Motor neuron (in vitro differentiated cells): ENCODE measurements at regions of chr15 and their contacts with region 1.

Region 1: GRCh38 chr15:89750560-89751542 is at the start of gene MESP1:
- ATAC-seq: peak; percentile 94 to 97 (median 96)
- H3K4me3 ChIP-seq: peak within 1 kb of the TSS; percentile 48 to 69 (median 48)
- H3K27ac ChIP-seq: no peak within 1 kb of the TSS
- H3K4me1 ChIP-seq: peaks cover 0 to 2% of the 10 kb centered on the region in 2 donors
- total RNA-seq, gene MESP1: 0.08 to 2.7 (median 1.3) TPM

Region 2: DNA sequence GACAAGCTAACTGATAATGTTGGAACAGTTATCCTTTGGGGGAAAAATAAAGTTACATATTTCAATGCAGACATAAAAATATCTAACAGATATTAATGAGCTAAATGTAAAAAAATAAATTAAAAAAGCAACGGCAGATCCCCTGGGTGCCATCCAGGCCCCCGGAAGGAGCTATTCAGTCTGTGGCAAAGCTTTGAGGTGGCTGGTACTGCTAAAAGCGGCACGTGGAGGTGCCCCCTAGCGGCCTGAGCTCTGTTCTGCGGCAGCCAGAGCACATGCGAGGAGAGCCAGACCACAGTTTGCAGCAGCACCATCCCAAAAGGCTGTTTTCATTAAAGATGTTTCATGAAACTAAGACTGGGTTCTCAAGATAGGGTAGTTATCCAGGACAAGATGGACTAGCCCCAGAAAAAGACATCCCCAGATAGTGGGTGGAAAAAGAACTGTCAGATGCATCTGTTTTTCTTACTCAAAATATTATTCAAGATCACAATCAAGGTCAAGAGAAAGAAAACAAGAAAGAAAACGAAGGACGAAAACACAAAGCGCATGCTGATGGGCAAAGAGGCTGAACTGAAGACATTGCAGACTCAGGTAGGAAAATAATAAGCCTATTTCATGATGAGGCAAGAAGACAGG is 124.2 kb after region 1 on chr15:
- in situ Hi-C with region 1: loop called in 5 of 9 experiments (anchors 10 to 25 kb)
- ATAC-seq: peak; percentile 79 to 99 (median 91)
- H3K4me3 ChIP-seq: no peak overlapping the region
- H3K27ac ChIP-seq: no peak overlapping the region
- H3K4me1 ChIP-seq: no peaks in the 10 kb centered on the region

Region 3: DNA sequence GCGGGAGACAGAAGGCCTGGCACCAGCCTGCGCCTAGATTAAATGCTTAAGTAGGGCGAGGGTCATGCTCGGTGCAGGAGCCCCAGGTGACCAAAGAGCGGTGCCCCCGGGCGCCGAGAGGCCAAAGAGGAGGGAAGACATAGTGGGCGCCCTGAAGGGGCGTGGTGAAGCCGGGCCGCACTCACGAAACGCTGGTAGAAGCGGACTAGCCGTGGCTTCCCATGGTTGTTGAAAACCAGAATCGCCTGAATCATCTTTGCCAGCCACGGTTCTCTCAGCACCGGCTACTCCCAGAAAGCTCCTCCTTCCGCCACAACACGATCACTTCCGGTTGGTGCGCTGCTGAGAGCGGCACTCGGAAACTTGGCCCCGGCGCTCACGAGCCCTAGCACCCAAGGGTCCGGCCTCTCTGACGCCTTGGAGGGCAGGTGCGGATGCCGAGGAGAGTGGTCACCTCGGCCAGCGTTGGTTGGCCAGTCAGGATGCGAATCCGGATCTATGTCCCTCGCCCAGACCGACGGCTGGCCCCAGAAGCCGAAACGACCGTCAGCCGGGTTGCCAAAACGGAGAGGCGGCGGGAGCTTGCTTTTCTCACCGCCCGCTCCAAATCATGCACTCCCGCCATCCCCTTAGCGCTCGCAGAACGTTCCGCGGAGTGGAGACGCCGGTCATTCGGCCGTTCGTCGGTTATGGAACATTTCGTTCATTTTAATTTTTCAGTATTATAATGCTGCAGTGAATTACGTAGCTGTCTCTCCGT is 143.0 kb after region 1 on chr15 and contains the start of gene AP3S2:
- in situ Hi-C with region 1: loop called in 1 of 9 experiments (anchors 25 kb)
- ATAC-seq: peak; percentile 93 to 99 (median 98)
- H3K4me3 ChIP-seq: peak within 1 kb of the TSS; percentile 67 to 88 (median 81)
- H3K27ac ChIP-seq: peak within 1 kb of the TSS; percentile 81 to 89
- H3K4me1 ChIP-seq: peaks cover 0 to 7% of the 10 kb centered on the region in 2 donors
- total RNA-seq, gene AP3S2: 35.5 to 68.8 (median 47.3) TPM

Region 4: DNA sequence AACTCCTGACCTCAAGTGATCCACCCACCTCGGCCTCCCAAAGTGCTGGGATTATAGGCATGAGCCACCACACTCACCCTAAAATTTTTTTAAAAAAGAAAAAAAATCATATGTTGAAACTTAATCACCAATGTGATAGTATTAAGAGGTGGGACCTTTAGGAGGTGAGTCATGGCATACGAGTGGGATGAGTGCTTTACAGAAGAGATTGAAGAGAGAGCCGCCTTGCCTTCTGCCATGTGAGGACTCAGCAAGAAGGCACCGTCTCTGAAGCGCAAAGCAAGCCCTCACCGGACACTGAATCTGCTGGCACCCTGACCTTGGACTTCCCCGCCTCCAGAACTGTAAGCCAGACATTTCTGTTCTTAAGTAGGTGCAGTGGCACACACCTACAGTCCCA is 156.4 kb after region 1 on chr15:
- in situ Hi-C with region 1: no loop called
- ATAC-seq: no peak
- H3K4me3 ChIP-seq: no peak overlapping the region
- H3K27ac ChIP-seq: no peak overlapping the region
- H3K4me1 ChIP-seq: peaks cover 3 to 6% of the 10 kb centered on the region in 2 donors

Region 5: DNA sequence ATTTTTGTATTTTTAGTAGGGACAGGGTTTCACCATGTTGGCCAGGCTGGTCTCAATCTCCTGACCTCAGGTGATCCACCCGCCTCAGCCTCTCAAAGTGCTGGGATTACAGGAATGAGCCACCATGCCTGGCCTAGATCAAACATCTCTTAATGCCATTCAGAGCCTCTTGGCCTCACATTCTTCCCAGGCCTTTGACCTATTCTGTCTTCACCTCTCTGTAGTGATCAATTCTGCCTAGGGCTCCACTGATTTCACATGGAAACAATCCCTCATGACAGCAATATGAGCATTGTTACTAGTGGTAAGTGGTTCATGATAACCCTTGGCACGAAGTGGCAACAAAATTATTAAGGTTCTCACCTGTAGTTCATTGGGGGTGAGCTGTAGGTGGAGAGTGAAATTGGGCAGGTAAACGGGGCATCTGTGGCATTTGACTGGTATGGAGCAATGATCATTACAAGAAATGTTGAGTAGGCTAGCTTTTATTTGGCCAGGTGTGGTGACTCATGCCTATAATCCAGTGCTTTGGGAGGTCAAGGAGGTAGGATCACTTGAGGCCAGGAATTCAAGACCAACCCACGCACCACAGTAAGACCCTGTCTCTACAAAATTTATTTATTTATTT is 166.7 kb after region 1 on chr15:
- in situ Hi-C with region 1: no loop called
- ATAC-seq: no peak
- H3K4me3 ChIP-seq: no peak overlapping the region
- H3K27ac ChIP-seq: no peak overlapping the region
- H3K4me1 ChIP-seq: peaks cover 3 to 6% of the 10 kb centered on the region in 2 donors

Region 6: GRCh38 chr15:90086868-90087268 is 336.0 kb after region 1 on chr15:
- in situ Hi-C with region 1: loop called in 3 of 9 experiments (anchors 25 kb)
- ATAC-seq: peak in 7 of 8 experiments; percentile 28 to 79 (median 58)
- H3K4me3 ChIP-seq: no peak overlapping the region
- H3K27ac ChIP-seq: no peak overlapping the region
- H3K4me1 ChIP-seq: no peaks in the 10 kb centered on the region